ENCODE measurements at regions of chr2 and their contacts with region 1.

Region 1: DNA sequence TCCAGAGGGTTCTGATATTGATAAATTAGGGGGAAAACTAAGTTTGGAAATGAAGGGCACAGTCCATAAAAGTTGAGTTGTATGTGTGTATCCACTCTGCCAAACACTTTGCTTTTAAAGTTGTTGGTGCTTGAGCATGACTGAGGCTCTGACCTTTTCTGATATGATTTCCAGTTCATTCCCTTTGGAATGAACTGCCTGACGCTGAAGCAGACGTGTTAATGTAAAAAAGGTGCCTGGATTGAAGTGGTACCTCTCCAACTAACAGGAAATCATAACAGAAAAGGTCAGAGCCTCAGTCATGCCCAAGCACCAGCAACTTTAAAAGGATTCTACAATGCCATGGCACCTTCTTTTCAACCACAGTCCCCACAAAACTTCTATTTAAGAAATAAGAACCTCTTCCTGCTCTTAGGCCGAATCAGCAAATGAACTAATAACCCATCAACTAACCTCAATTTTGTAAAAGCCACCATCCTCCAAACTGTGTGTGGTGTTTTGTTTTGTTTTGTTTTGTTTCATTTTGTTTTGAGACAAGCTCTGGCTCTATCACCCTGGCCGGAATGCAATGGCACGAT is 52.6 kb downstream of the MEMO1 start:
- DNase-seq: no peak
- H3K4me3 Mint-ChIP-seq: no peak overlapping the region
- H3K27ac Mint-ChIP-seq: no peak overlapping the region
- H3K4me1 Mint-ChIP-seq: peaks cover 18% of the 10 kb centered on the region
- H3K27me3 Mint-ChIP-seq: no peaks in the 10 kb centered on the region
- CTCF ChIP-seq: no peak

Region 2: DNA sequence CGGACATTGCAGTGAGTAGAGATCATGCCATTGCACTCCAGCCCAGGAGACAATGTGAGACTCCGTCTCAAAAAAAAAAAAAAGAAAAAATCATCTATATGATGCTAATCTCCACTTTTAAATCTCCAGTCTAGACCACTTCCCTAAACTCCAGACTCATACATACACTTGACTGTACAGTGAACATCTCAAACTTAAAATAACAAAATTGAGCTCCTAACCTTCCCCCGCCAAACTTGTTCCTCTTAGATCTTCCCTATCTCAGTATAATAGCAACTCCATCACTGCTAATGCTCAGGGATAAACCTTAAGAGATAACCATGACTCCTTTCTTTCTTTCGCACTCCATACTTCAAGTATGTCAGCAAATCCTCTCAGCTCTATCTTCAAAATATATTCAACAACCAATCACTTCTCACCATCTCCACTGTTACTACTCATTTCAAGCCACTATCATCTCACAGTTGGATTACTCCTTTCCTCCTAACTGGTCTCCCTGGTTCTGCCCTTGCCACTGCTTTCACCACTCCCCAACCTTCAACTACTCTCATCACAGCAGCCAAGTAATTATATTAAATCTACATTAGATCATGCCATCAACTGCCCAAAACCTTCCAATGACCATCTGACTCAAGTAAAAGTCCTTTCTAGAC is 40.6 kb after region 1 on chr2:
- CTCF ChIA-PET with region 1: interaction called, 10 read pairs
- intact Hi-C with region 1: no loop called
- DNase-seq: no peak
- H3K4me3 Mint-ChIP-seq: no peak overlapping the region
- H3K27ac Mint-ChIP-seq: no peak overlapping the region
- H3K4me1 Mint-ChIP-seq: peaks cover 20% of the 10 kb centered on the region
- H3K27me3 Mint-ChIP-seq: no peaks in the 10 kb centered on the region
- CTCF ChIP-seq: no peak

Measured in Calu3 (cell line).